Activated T-helper 2 cell treated with anti-CD3 and anti-CD28 coated beads, Interferon-gamma antibody, Interleukin-2, Interleukin-4, amounts not matched to agents 10 μg/mL and 5 μg/mL and 100 μg/mL, durations not matched to agents 14 hours and 24 hours and 36 hours (primary cell): ENCODE measurements at regions of chr2 and their contacts with region 1.

Region 1: DNA sequence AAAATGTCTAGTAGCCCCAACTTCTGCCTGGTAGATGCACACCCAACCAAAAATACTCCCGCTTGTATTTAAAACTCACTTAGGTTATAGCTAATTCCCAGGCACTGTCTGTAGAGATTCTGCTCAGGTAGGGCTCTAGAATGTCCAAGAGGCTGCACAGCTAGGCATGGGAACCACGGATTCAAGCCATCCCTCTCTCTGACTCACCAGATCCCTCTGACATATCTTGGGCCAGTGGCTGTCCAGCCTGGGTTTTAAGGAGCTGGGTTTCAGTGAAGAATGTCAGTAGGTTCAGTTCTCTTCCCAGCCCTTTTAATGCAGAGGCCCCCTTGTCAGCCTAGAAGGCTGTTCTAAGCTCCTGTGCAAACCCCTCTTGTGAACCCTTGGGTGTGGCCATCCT is 15.9 kb upstream of the IL1R1 start:
- DNase-seq: no peak
- H3K4me3 Mint-ChIP-seq: no peak overlapping the region
- H3K27ac Mint-ChIP-seq: no peak overlapping the region
- H3K4me1 Mint-ChIP-seq: peaks cover 13% of the 10 kb centered on the region
- H3K27me3 Mint-ChIP-seq: peaks cover 31% of the 10 kb centered on the region

Region 2: DNA sequence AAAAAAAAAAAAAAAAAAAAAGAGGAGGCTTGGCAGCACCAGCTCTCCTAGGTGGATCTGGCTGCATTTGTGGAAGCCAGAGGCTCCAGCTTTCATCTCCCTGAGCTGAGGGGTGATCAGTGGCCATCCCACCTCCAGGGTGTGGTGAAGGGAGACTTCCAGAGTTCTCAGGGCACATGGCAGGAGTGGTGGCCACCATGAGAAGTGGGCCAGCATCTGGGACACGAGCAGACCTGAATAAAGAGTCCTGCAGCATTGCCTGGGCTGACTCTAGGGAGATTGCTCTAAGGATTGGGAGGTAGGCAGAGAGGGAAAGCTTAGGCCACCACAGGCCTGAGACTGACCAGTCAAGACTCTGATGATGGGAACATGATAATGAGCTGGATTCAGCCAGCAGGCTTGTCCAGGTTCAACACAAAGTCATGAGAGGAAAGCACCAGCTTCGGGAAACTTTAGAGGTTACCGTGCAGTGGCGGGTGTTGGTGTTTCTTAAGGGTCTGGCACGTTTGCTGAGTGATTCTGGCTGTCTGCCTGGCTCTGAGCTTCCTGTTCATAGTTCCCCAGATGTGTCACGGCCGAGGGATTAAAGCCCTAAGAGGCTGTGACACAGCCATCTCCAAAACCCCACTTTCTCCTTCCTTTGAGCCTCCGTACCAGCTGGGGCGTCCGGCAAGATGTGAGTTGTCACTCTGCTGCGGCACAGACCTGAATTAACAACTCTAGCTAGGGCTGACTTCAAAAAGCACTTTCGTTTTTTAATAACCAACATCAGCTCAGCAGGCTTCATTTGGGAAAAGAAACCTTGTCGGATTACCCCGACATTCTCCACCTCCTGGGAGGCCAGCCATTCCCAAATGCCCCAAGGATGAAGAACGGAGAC is 22.4 kb before region 1 on chr2:
- intact Hi-C with region 1: loop called (anchors 1 kb)
- DNase-seq: no peak
- H3K4me3 Mint-ChIP-seq: peak overlapping the region; percentile 67
- H3K27ac Mint-ChIP-seq: no peak overlapping the region
- H3K4me1 Mint-ChIP-seq: peaks cover 25% of the 10 kb centered on the region
- H3K27me3 Mint-ChIP-seq: peaks cover 50% of the 10 kb centered on the region

Region 3: DNA sequence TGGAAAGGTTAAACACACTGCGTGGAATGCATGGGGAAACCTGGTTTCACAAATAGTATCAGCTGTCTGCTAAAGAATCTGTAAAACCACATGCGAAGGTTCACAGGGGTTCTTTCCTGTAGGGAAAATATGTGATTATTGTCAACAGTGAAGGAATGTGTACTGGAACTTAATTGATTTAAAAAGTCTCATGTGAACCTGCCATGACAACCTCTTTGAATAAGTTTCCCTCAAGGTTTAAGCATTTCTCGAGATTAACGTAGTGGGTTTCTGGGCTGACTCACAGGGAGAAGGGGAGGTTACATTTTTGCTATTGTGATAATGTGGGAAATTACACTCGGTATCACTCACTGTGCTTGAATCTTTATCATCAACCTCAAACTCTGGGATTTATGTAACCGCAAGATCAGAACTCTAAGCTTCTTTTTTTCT is 12.3 kb before region 1 on chr2:
- intact Hi-C with region 1: loop called (anchors 1 kb)
- DNase-seq: no peak
- H3K4me3 Mint-ChIP-seq: no peak overlapping the region
- H3K27ac Mint-ChIP-seq: no peak overlapping the region
- H3K4me1 Mint-ChIP-seq: peaks cover 25% of the 10 kb centered on the region
- H3K27me3 Mint-ChIP-seq: peaks cover 43% of the 10 kb centered on the region